CD8-positive, alpha-beta T cell (primary cell): ENCODE measurements at regions of chr12 and their contacts with region 1.

Region 1: GRCh38 chr12:98516184-98516873 is 939 bp downstream of the TMPO start:
- DNase-seq: peak; percentile 58 to 95 (median 82)
- ATAC-seq: peak; percentile 67
- H3K4me3 ChIP-seq: peak overlapping the region; percentile 68 to 88
- H3K4me3 Mint-ChIP-seq: peak overlapping the region; percentile 99
- H3K27ac ChIP-seq: peak overlapping the region; percentile 55 to 77
- H3K27ac Mint-ChIP-seq: peak overlapping the region; percentile 98
- H3K4me1 ChIP-seq: peaks cover 50% of the 10 kb centered on the region
- H3K4me1 Mint-ChIP-seq: peaks cover 57% of the 10 kb centered on the region
- H3K27me3 ChIP-seq: no peaks in the 10 kb centered on the region
- H3K27me3 Mint-ChIP-seq: no peaks in the 10 kb centered on the region
- CTCF ChIP-seq: peak; percentile 90

Region 2: GRCh38 chr12:98424726-98425401 is 91.5 kb before region 1 on chr12:
- CTCF ChIA-PET with region 1: interaction called, 4 read pairs
- POLR2A ChIA-PET with region 1: no interaction called
- intact Hi-C with region 1: loop called in 1 of 2 experiments (anchors 1 kb)
- DNase-seq: peak in 8 of 9 experiments; percentile 7 to 65 (median 44)
- ATAC-seq: peak; percentile 73
- H3K4me3 ChIP-seq: no peak overlapping the region
- H3K4me3 Mint-ChIP-seq: no peak overlapping the region
- H3K27ac ChIP-seq: no peak overlapping the region
- H3K27ac Mint-ChIP-seq: no peak overlapping the region
- H3K4me1 ChIP-seq: no peaks in the 10 kb centered on the region
- H3K4me1 Mint-ChIP-seq: no peaks in the 10 kb centered on the region
- H3K27me3 ChIP-seq: no peaks in the 10 kb centered on the region
- H3K27me3 Mint-ChIP-seq: peaks cover 2% of the 10 kb centered on the region
- CTCF ChIP-seq: peak; percentile 68

Region 3: DNA sequence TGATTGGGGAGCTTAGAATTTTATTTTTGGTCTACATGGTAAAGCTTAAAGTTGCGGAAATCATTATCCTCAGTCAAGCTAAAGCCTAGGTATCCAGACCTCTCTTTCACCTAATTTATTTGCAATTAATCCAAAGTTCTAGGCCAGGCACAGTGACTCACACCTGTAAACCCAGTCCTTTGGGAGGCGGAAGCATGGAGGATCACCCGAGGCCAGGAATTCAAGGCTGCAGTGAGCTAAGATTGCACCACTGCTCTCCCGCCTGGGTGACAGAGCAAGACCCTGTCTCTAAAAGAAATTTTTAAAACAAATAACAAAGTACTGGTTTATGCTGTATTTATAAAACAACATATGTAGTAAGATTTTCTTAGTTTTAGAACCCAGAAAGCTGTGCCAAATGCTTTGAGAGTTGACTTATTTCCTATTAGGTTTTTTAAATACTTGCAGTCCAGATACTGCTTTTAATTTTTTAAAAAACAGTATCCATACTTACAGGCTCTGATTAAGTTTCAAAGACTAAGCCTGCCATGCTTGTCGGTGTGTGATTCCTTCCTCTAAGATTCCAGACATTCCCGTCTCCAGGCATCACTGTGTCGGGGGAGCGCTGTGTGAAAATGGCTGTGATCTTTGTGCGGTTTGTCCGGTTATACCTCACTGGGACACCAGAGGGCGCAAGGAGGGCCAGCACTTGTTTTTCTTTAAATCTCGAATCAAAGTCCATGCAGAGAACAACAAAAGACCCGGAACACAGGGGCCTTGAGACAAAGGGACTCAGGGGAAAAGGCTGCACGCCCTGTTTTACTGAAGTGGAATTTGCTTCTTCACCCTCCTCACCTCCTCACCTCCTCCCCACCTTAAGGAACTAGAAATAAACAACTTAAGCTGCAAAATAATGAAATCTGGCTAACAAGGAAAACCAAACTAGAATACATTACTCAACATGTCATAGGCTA is 25.6 kb before region 1 on chr12:
- CTCF ChIA-PET with region 1: interaction called, 120 read pairs
- POLR2A ChIA-PET with region 1: interaction called, 68 read pairs
- intact Hi-C with region 1: loop called (anchors 1 kb)
- DNase-seq: peak; percentile 60 to 90 (median 86)
- ATAC-seq: peak; percentile 99
- H3K4me3 ChIP-seq: no peak overlapping the region
- H3K4me3 Mint-ChIP-seq: peak overlapping the region; percentile 65
- H3K27ac ChIP-seq: peak overlapping the region in 1 of 2 experiments; percentile 51
- H3K27ac Mint-ChIP-seq: peak overlapping the region; percentile 93
- H3K4me1 ChIP-seq: peaks cover 8% of the 10 kb centered on the region
- H3K4me1 Mint-ChIP-seq: peaks cover 7% of the 10 kb centered on the region
- H3K27me3 ChIP-seq: no peaks in the 10 kb centered on the region
- H3K27me3 Mint-ChIP-seq: no peaks in the 10 kb centered on the region
- CTCF ChIP-seq: peak; percentile 84

Region 4: DNA sequence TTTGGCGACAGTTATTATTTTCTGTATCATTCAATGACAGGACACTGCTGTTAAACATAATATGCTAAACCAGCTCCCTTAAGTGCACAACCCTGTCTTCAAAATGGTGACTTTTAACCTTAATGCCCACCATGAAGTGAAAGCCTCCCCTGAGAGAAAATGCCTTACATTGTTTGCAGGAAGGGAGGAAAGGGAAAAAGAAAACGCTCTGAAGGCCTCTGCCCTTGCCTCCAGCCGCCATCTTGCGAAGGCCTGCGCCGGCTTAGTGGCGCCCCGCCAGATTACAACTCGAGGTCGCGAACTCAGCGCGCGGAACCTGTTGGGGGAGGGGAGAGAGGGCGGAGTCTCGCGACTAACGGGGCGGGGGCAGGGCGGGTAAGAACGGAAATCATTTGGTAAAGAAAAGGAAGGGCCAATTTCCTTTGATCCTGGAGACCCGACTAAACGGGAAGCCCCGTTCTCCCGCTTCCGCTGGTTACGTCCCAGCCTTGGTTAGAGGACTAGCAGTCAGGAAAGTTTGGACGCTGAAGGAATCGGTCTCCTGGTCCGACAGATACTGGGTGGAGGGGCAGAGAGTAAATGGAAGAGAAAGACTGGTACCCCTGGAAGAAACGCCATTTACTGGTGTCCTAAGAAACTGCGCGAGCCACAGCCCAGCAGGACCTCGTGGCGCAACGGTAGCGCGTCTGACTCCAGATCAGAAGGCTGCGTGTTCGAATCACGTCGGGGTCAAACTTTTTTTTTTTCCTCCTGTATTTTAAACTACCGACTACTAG is 12.5 kb before region 1 on chr12:
- CTCF ChIA-PET with region 1: interaction called, 14 read pairs
- POLR2A ChIA-PET with region 1: interaction called, 48 read pairs
- intact Hi-C with region 1: loop called (anchors 1 kb)
- DNase-seq: peak; percentile 89 to 97 (median 94)
- ATAC-seq: peak; percentile 89
- H3K4me3 ChIP-seq: peak overlapping the region; percentile 89 to 96
- H3K4me3 Mint-ChIP-seq: peak overlapping the region; percentile 99
- H3K27ac ChIP-seq: peak overlapping the region; percentile 91 to 99
- H3K27ac Mint-ChIP-seq: peak overlapping the region; percentile 99
- H3K4me1 ChIP-seq: peaks cover 3% of the 10 kb centered on the region
- H3K4me1 Mint-ChIP-seq: peaks cover 20% of the 10 kb centered on the region
- H3K27me3 ChIP-seq: no peaks in the 10 kb centered on the region
- H3K27me3 Mint-ChIP-seq: no peaks in the 10 kb centered on the region
- CTCF ChIP-seq: no peak

Region 5: DNA sequence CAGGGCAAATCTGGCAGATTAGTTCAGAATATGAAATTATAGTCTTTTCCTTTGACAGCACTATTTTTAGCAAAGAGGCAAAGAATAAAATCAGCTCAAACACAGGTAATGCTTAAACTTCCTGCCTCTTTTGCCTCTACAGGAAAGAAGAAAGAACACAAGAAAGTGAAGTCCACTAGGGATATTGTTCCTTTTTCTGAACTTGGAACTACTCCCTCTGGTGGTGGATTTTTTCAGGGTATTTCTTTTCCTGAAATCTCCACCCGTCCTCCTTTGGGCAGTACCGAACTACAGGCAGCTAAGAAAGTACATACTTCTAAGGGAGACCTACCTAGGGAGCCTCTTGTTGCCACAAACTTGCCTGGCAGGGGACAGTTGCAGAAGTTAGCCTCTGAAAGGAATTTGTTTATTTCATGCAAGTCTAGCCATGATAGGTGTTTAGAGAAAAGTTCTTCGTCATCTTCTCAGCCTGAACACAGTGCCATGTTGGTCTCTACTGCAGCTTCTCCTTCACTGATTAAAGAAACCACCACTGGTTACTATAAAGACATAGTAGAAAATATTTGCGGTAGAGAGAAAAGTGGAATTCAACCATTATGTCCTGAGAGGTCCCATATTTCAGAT is 16.5 kb after region 1 on chr12:
- CTCF ChIA-PET with region 1: interaction called, 16 read pairs
- POLR2A ChIA-PET with region 1: interaction called, 5 read pairs
- intact Hi-C with region 1: loop called in 1 of 2 experiments (anchors 2 kb)
- DNase-seq: peak in 3 of 9 experiments; percentile 12 to 67 (median 54)
- ATAC-seq: peak; percentile 40
- H3K4me3 ChIP-seq: no peak overlapping the region
- H3K4me3 Mint-ChIP-seq: no peak overlapping the region
- H3K27ac ChIP-seq: no peak overlapping the region
- H3K27ac Mint-ChIP-seq: peak overlapping the region; percentile 41
- H3K4me1 ChIP-seq: no peaks in the 10 kb centered on the region
- H3K4me1 Mint-ChIP-seq: peaks cover 13% of the 10 kb centered on the region
- H3K27me3 ChIP-seq: no peaks in the 10 kb centered on the region
- H3K27me3 Mint-ChIP-seq: no peaks in the 10 kb centered on the region
- CTCF ChIP-seq: peak; percentile 59

Region 6: DNA sequence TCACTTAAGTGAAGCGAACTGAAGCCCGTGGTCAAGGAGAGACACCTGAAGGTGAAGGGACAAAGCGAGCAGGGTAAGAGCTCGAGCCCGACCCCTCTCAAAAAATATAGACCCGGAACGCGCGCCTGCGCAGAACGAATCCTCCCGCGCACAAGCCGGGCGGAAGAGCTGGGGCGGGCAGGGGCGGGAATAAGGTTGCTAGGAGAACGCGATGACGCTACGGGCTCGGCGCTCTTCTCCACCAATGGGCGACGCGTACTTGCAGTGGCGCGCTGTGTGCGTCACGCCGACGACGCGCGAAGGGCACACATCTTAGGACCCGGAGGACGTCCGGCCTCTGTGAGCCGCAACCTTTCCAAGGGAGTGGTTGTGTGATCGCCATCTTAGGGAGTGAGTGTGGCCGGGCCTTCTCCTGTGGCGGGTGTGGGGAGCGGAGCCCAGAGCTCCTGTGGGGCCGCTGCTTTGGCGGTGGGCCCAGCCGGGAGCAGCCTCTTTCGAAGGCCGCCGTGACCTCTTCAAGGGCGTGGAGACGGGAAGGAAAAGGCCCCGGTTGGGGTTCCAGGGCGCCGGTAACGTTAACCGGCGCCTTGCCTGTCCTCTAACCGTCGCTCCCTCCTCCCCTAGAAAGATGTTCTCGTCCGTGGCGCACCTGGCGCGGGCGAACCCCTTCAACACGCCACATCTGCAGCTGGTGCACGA is 77.2 kb after region 1 on chr12 and contains the start of gene SLC25A3:
- CTCF ChIA-PET with region 1: interaction called, 3 read pairs
- POLR2A ChIA-PET with region 1: interaction called, 17 read pairs
- intact Hi-C with region 1: loop called (anchors 1 kb)
- DNase-seq: peak; percentile 90 to 99 (median 95)
- ATAC-seq: peak; percentile 92
- H3K4me3 ChIP-seq: peak within 1 kb of the TSS; percentile 89 to 97
- H3K4me3 Mint-ChIP-seq: peak within 1 kb of the TSS; percentile 97
- H3K27ac ChIP-seq: peak within 1 kb of the TSS; percentile 92 to 99
- H3K27ac Mint-ChIP-seq: peak within 1 kb of the TSS; percentile 98
- H3K4me1 ChIP-seq: peaks cover 23% of the 10 kb centered on the region
- H3K4me1 Mint-ChIP-seq: peaks cover 39% of the 10 kb centered on the region
- H3K27me3 ChIP-seq: no peaks in the 10 kb centered on the region
- H3K27me3 Mint-ChIP-seq: no peaks in the 10 kb centered on the region
- CTCF ChIP-seq: no peak
- total RNA-seq, gene SLC25A3: 686 TPM

Region 7: GRCh38 chr12:98644711-98645402 is 128.5 kb after region 1 on chr12 and contains the starts of genes APAF1 and IKBIP:
- CTCF ChIA-PET with region 1: no interaction called
- POLR2A ChIA-PET with region 1: interaction called, 3 read pairs
- intact Hi-C with region 1: loop called in 1 of 2 experiments (anchors 1 kb)
- DNase-seq: peak; percentile 94 to 99 (median 97)
- ATAC-seq: peak; percentile 89
- H3K4me3 ChIP-seq: peak within 1 kb of the TSS; percentile 93 to 99
- H3K4me3 Mint-ChIP-seq: peak within 1 kb of the TSS; percentile 99
- H3K27ac ChIP-seq: peak within 1 kb of the TSS; percentile 60 to 90
- H3K27ac Mint-ChIP-seq: peak within 1 kb of the TSS; percentile 94
- H3K4me1 ChIP-seq: peaks cover 14% of the 10 kb centered on the region
- H3K4me1 Mint-ChIP-seq: peaks cover 44% of the 10 kb centered on the region
- H3K27me3 ChIP-seq: no peaks in the 10 kb centered on the region
- H3K27me3 Mint-ChIP-seq: no peaks in the 10 kb centered on the region
- CTCF ChIP-seq: no peak
- total RNA-seq, gene APAF1: 10.5 to 11.9 TPM
- total RNA-seq, gene IKBIP: 1.4 to 1.9 TPM

Region 8: DNA sequence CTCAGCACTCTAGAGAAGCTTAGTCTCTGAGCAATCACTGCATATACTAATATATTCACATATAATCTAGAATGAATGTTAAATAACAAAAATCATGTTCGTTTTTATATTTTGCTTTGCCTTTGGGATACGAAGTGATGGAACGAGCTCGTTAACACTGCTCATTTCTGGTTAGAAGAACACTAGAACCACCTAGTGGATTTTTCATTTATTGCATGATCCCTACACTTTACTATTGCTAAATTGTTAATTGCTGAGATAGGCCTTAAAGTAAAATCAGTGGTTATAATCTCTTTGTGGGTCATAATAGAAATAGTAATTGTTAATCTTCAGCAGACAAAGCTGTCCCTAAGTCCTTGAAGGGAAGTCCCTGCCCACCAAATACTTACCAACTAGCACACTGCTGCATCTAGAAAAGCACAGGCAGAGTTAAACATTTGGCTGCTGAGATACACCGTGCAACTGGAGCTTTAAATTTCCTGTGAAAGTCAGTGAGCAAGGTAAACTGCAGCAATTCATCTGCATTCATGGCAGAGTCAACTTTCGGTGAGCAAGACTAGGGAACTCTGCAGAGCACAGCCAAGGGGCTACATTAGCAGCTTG is 482.5 kb after region 1 on chr12:
- CTCF ChIA-PET with region 1: no interaction called
- POLR2A ChIA-PET with region 1: no interaction called
- intact Hi-C with region 1: no loop called
- DNase-seq: peak in 2 of 9 experiments; percentile 3 to 9
- ATAC-seq: no peak
- H3K4me3 ChIP-seq: no peak overlapping the region
- H3K4me3 Mint-ChIP-seq: no peak overlapping the region
- H3K27ac ChIP-seq: no peak overlapping the region
- H3K27ac Mint-ChIP-seq: no peak overlapping the region
- H3K4me1 ChIP-seq: no peaks in the 10 kb centered on the region
- H3K4me1 Mint-ChIP-seq: no peaks in the 10 kb centered on the region
- H3K27me3 ChIP-seq: no peaks in the 10 kb centered on the region
- H3K27me3 Mint-ChIP-seq: peaks cover 5% of the 10 kb centered on the region
- CTCF ChIP-seq: peak; percentile 24